G401 (cell line): ENCODE measurements at regions of chr4 and their contacts with region 1.

Region 1: DNA sequence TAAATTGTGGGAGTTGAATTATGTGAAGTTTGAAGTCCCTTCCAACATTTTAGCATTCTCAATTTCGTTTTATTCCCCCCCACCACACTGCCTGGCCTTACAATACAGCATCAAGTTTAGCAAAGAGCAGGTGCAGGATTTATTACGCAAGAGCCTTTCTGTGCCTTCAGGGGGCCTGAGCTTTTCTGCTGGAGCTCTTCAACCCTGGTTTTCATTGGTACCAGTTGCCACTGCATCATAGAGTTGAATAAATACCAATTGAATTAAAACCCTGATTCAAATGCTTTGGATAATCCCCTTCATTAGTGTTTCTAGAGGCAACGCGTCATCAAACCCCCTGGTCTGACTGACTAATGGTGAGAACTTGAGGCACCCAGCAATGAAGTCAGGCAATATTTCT is 43.6 kb upstream of the KIT start:
- DNase-seq: no peak

Region 2: GRCh38 chr4:54547299-54548097 is 66.7 kb before region 1 on chr4:
- in situ Hi-C with region 1: loop called (anchors 5 kb)
- DNase-seq: no peak